GM10248 (cell line): ENCODE measurements at regions of chr15 and their contacts with region 1.

Region 1: DNA sequence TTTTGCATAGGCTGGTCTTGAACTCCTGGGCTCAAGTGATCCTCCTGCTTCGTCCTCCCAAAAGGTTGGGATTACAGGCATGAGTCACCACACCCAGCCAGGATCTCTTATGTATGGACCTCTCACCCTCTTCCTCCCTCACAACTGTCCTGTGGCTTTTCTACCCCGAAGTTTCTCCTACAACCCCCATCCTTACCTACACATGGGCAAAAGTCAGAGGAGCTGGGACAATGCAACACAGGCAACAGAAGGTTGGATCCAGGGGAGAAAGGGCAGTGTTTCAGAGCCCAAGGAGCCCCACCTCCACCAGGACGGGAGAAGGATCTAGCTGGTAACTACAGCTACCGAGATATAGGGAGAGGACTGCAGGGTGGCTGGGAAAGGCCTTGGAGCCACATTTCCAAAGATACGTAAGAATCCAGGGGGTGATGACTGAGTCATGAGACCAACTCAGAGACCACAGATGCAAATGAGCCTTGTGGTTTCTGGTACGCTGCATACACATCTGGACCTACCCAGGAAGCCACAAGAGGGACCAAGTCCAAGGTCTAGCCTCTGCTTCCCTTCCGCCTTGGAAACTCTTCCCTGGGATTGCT is 13.6 kb downstream of the IGDCC4 start:
- DNase-seq: peak; percentile 57
- CTCF ChIP-seq: no peak

Region 2: DNA sequence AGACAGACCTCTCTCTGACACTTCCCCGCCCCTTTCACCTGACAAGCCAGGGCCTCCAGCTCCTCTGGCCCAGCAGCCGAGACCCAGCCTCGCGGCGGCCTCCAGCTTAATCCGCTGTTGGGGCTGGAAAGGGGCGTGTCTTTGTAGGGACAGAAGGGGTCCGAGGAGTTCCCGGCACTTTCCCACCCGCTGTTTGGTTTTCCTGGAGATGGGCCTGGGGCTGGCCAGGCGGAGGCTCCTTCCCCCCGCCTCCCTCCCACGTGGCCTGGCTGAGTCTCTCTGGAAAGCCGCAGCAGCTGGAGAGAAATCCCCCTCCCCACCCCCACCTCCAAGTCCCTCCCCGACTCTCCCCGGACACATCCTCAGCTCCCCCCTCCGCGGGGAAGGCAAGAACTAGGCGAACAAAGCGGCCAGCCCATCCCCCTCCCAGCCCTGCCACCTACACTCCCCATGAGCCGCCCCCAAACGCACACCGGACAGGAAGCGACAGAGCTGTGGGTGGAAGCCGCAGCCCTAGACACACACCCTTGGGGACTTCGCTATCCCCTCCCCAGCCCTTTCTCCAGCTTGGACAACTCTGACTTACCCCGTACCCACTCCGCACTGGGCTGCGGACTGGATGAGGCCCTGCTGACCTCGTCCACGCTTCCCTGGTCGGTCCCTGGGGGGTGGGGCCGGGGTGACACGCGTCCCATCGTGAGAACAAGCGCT is 12.4 kb after region 1 on chr15:
- CTCF ChIA-PET with region 1: interaction called, 156 read pairs
- POLR2A ChIA-PET with region 1: no interaction called
- DNase-seq: peak; percentile 76
- CTCF ChIP-seq: no peak